GM12878 (cell line): ENCODE measurements at regions of chr6 and their contacts with region 1.

Region 1: GRCh38 chr6:70107852-70108629 is 194.8 kb downstream of the COL9A1 start:
- DNase-seq: peak; percentile 21
- ATAC-seq: peak; percentile 54
- H3K4me3 ChIP-seq: no peak overlapping the region
- H3K27ac ChIP-seq: no peak overlapping the region
- H3K4me1 ChIP-seq: no peaks in the 10 kb centered on the region
- H3K27me3 ChIP-seq: no peaks in the 10 kb centered on the region
- CTCF ChIP-seq: peak; percentile 50 to 71 (median 65)
- EP300 ChIP-seq: no peak
- POLR2A ChIP-seq: no peak
- RAD21 ChIP-seq: peak; percentile 92

Region 2: DNA sequence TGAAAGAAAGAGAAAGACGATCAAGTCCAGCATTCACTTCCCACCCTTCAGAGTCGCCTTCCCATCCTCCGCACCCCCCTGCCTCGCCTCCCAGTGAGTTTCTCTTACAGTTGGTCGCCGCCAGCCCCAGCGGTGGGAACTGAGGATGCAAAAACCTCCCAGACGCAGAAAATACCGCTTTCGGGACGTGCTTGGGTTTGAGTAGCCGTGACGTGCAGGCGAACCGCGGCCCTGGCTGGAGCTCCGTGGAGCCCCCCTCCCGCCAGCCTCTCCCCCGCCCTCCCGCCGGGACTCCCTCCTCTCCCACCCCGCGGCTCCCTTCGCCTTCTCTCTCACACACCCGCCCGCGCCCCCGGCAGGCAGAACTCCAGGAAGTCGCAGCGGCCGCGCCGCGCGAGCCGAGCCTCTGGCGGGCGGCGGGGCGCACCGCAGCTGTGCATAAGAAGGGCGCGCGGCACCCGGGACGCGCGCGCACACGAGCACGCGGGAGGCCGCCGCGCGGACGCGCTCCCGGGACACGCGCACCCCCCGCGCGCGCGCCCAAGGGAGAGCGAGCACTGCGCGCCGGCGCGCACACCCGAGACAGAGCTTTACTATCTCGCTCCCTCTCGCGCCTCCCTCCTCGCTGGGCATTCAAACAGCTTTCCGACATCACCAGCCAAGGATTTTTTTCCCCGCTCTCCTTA is 1473.2 kb before region 1 on chr6 and contains the start of gene ADGRB3:
- CTCF ChIA-PET with region 1: no interaction called
- POLR2A ChIA-PET with region 1: no interaction called
- RAD21 ChIA-PET with region 1: no interaction called
- SMC1A ChIA-PET with region 1: no interaction called
- in situ Hi-C with region 1: loop called (anchors 25 kb)
- intact Hi-C with region 1: loop called (anchors 5 kb)
- DNase-seq: no peak
- ATAC-seq: peak; percentile 75
- H3K4me3 ChIP-seq: peak within 1 kb of the TSS; percentile 67
- H3K27ac ChIP-seq: no peak within 1 kb of the TSS
- H3K4me1 ChIP-seq: no peaks in the 10 kb centered on the region
- H3K27me3 ChIP-seq: peaks cover 1 to 16% of the 10 kb centered on the region in 2 experiments
- CTCF ChIP-seq: no peak
- EP300 ChIP-seq: no peak
- POLR2A ChIP-seq: no peak
- RAD21 ChIP-seq: no peak
- polyA plus RNA-seq, gene ADGRB3: not detected

Region 3: GRCh38 chr6:69719602-69720193 is 388.3 kb before region 1 on chr6:
- CTCF ChIA-PET with region 1: interaction called, 17 read pairs
- POLR2A ChIA-PET with region 1: no interaction called
- RAD21 ChIA-PET with region 1: interaction called, 3 read pairs
- SMC1A ChIA-PET with region 1: interaction called, 3 read pairs
- in situ Hi-C with region 1: no loop called
- intact Hi-C with region 1: loop called (anchors 5 kb)
- DNase-seq: no peak
- ATAC-seq: peak; percentile 94
- H3K4me3 ChIP-seq: no peak overlapping the region
- H3K27ac ChIP-seq: no peak overlapping the region
- H3K4me1 ChIP-seq: no peaks in the 10 kb centered on the region
- H3K27me3 ChIP-seq: no peaks in the 10 kb centered on the region
- CTCF ChIP-seq: peak; percentile 35 to 47 (median 45)
- EP300 ChIP-seq: no peak
- POLR2A ChIP-seq: no peak
- RAD21 ChIP-seq: peak; percentile 62

Region 4: GRCh38 chr6:69813508-69813907 is 294.5 kb before region 1 on chr6:
- CTCF ChIA-PET with region 1: interaction called, 4 read pairs
- POLR2A ChIA-PET with region 1: no interaction called
- RAD21 ChIA-PET with region 1: interaction called, 11 read pairs
- SMC1A ChIA-PET with region 1: interaction called, 9 read pairs
- in situ Hi-C with region 1: no loop called
- intact Hi-C with region 1: no loop called
- DNase-seq: no peak
- ATAC-seq: peak; percentile 42
- H3K4me3 ChIP-seq: no peak overlapping the region
- H3K27ac ChIP-seq: peak overlapping the region; percentile 38
- H3K4me1 ChIP-seq: peaks cover 41% of the 10 kb centered on the region
- H3K27me3 ChIP-seq: no peaks in the 10 kb centered on the region
- CTCF ChIP-seq: no peak
- EP300 ChIP-seq: peak in 1 of 2 experiments; percentile 61; a peak in 1 of 4 replicates
- POLR2A ChIP-seq: no peak
- RAD21 ChIP-seq: no peak

Region 5: GRCh38 chr6:69866770-69867638 is 241.0 kb before region 1 on chr6:
- CTCF ChIA-PET with region 1: interaction called, 33 read pairs
- POLR2A ChIA-PET with region 1: no interaction called
- RAD21 ChIA-PET with region 1: interaction called, 21 read pairs
- SMC1A ChIA-PET with region 1: interaction called, 16 read pairs
- in situ Hi-C with region 1: no loop called
- intact Hi-C with region 1: no loop called
- DNase-seq: peak; percentile 48
- ATAC-seq: peak; percentile 75
- H3K4me3 ChIP-seq: peak overlapping the region; percentile 79
- H3K27ac ChIP-seq: peak overlapping the region; percentile 92
- H3K4me1 ChIP-seq: peaks cover 7% of the 10 kb centered on the region; the same call in 1 of the 2 replicates
- H3K27me3 ChIP-seq: no peaks in the 10 kb centered on the region
- CTCF ChIP-seq: peak; percentile 26 to 31 (median 27); a peak in 4 of 6 replicates
- EP300 ChIP-seq: 0 out of 4 replicates have a peak, but pooled peaks of 1 of the 2 experiments have one; percentile 23
- POLR2A ChIP-seq: peak; percentile 87
- RAD21 ChIP-seq: peak; percentile 56

Region 6: DNA sequence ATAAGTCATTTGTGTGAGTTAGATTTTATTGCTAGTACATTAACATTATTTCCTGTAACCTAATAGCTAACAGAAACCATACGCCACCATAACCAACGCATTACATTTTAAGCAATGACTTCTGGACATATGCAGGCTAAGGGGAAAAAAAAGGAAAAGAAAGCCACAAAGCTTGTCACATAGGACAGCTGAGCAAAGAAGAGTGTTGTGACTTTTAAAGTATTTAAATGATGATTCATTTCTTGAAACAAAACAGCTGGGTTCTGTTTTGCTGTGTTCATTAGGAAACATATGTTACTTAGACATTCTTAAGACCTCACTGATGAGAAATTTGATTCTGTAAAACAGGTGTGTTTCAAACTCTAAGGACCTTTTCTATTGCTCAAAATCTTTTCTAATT is 23.5 kb after region 1 on chr6:
- CTCF ChIA-PET with region 1: interaction called, 6 read pairs
- POLR2A ChIA-PET with region 1: no interaction called
- RAD21 ChIA-PET with region 1: interaction called, 10 read pairs
- SMC1A ChIA-PET with region 1: interaction called, 8 read pairs
- in situ Hi-C with region 1: no loop called
- intact Hi-C with region 1: no loop called
- DNase-seq: peak; percentile 59
- ATAC-seq: peak; percentile 85
- H3K4me3 ChIP-seq: no peak overlapping the region
- H3K27ac ChIP-seq: no peak overlapping the region; the same call in 1 of the 2 replicates
- H3K4me1 ChIP-seq: peaks cover 20% of the 10 kb centered on the region
- H3K27me3 ChIP-seq: no peaks in the 10 kb centered on the region
- CTCF ChIP-seq: no peak
- EP300 ChIP-seq: peak in 1 of 2 experiments; percentile 67; a peak in 2 of 4 replicates
- POLR2A ChIP-seq: no peak
- RAD21 ChIP-seq: no peak